Activated naive CD4-positive, alpha-beta T cell treated with anti-CD3 and anti-CD28 coated beads for 36 hours (primary cell): ENCODE measurements at regions of chr3 and their contacts with region 1.

Region 1: DNA sequence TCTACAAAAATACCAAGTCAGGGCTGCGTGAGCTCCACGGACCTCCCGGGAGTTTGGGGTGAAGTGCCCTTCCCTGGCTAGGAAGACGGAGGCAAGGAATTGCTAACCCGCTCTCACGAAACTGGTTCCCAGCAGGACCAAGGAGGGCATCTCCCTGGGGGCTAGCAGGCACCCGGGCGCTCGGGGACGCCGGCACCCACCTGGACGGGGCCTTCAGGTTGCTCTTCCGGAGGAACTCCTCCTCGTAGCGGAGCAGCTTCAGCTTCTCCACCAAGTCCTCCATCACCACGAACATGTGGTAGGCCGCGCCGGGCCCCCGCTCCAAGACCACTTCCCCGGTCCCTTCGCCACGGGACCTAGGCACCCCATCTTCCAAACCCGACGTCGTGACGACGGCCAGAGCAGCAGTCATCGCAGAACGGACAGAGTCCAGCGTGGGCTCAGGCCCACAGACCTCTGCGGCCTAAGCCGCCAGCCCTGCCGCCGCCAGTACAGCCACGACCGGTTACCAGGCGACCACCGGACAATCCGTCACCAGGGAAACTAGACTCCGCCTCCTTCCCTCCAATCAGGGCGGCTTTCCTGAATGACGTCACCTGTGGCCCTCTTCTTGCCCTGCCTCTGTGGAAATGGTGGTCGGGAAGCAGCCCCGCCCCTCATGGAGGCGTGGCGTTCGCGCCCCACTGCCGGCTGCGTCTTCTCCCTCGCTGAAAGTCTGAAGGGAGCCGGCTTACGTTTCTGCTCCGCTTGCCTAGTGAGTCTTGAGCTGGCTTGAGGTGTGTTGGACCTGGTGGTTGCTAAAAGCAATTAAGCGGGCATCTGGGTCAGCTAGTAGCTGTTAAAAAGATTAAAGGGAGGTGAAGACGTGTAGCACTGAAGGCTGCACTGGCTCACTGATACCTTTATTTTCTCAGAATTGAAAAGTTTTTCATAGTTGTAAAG is at the start of gene IFT57:
- DNase-seq: peak; percentile 95
- H3K4me3 Mint-ChIP-seq: peak within 1 kb of the TSS; percentile 97
- H3K27ac Mint-ChIP-seq: peak within 1 kb of the TSS; percentile 97
- H3K4me1 Mint-ChIP-seq: peaks cover 42% of the 10 kb centered on the region
- H3K27me3 Mint-ChIP-seq: no peaks in the 10 kb centered on the region
- total RNA-seq, gene IFT57: 26.2 to 27.7 TPM

Region 2: DNA sequence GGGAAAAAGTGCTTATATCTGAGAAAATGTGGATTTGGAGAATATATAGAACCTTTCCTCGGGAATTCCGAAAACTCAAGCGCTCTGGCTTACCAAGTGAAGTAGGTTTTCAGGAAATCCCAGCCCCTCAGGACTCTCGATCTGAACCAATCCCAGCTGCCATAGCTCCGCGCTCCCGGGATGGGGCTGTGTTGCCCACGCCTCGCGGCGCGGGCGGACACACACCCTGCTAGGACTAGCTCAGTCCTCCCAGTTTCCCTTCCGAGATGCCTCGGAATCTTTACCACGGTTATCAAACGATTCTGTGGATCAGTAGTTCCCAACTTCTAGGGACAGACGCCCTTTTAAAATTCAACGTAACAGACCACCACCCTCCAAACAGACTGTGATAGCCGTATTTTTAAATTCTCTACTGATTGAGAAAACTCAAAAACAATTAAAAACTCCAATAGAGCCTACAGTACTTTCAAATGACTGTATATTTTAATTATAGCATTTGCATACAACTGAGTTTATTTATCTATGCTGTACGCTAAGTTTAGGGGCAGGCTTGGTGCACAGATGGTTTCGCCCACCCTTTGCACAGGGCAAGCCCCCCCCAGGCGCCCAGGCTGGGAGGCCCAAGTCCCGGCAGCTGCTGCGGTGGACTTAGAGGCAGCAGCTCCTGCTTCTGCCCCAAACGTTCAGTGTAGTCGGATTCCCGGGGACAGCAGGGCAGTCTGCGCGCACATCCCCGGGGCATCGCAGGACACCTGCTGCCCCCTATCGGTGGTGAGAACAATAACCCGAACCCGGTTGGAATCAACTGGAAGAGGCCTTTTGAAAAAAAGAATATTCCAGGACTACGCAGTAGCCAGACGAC is 792.6 kb before region 1 on chr3:
- CTCF ChIA-PET with region 1: no interaction called
- intact Hi-C with region 1: loop called (anchors 5 kb)
- DNase-seq: peak; percentile 70
- H3K4me3 Mint-ChIP-seq: peak overlapping the region; percentile 74
- H3K27ac Mint-ChIP-seq: no peak overlapping the region
- H3K4me1 Mint-ChIP-seq: peaks cover 12% of the 10 kb centered on the region
- H3K27me3 Mint-ChIP-seq: peaks cover 10% of the 10 kb centered on the region

Region 3: DNA sequence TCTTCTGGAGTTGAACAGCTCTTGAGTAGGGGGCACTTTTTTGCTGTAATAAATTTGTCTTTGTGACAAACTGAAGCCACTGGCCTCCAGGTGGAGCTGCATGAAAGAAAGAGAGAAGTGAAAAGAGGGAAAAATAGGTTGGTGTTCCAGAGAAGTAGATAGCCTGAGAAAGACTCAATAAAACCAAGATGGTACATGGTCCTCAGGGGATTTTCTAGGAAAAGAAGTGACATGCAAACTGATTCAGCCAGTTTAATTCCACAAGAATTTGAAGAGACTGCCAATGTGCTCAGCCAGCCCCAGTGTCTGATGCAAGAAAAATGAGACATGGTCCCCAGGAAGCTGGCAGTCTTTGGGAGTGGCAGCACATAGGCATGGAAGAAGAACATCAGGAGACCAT is 284.0 kb before region 1 on chr3:
- CTCF ChIA-PET with region 1: no interaction called
- intact Hi-C with region 1: loop called (anchors 1 kb)
- DNase-seq: peak; percentile 21
- H3K4me3 Mint-ChIP-seq: no peak overlapping the region
- H3K27ac Mint-ChIP-seq: no peak overlapping the region
- H3K4me1 Mint-ChIP-seq: peaks cover 20% of the 10 kb centered on the region
- H3K27me3 Mint-ChIP-seq: no peaks in the 10 kb centered on the region

Region 4: GRCh38 chr3:108175352-108175751 is 46.8 kb before region 1 on chr3:
- CTCF ChIA-PET with region 1: no interaction called
- intact Hi-C with region 1: loop called (anchors 2 kb)
- DNase-seq: no peak
- H3K4me3 Mint-ChIP-seq: no peak overlapping the region
- H3K27ac Mint-ChIP-seq: peak overlapping the region; percentile 25
- H3K4me1 Mint-ChIP-seq: peaks cover 31% of the 10 kb centered on the region
- H3K27me3 Mint-ChIP-seq: no peaks in the 10 kb centered on the region

Region 5: DNA sequence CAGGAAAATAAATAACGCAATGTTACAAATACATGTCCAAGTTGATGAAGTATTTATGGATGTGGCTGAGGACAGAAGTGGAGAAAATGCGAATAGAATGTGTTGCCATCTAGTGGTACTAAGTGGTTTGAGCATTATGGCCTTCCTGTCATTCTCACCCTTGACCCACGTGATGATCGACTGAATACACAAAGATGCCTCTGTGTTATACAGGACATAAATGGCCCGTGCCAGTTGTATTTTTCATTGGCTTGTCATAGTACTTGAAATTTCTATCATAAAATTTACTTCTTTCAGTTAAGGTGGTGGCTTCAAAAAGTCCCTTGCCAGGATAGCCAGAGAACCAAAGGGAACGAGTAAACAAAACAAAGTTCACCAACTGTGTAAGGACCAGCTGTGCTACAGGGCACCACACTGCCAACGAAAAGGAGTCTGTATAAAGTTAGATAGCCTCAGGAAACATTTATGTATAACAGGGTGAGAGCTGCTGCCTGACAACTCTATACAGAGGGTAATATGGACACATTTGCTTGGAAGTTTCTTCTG is 184.6 kb after region 1 on chr3:
- CTCF ChIA-PET with region 1: interaction called, 4 read pairs
- intact Hi-C with region 1: loop called (anchors 2 kb)
- DNase-seq: peak; percentile 25
- H3K4me3 Mint-ChIP-seq: no peak overlapping the region
- H3K27ac Mint-ChIP-seq: no peak overlapping the region
- H3K4me1 Mint-ChIP-seq: peaks cover 2% of the 10 kb centered on the region
- H3K27me3 Mint-ChIP-seq: peaks cover 3% of the 10 kb centered on the region

Region 6: DNA sequence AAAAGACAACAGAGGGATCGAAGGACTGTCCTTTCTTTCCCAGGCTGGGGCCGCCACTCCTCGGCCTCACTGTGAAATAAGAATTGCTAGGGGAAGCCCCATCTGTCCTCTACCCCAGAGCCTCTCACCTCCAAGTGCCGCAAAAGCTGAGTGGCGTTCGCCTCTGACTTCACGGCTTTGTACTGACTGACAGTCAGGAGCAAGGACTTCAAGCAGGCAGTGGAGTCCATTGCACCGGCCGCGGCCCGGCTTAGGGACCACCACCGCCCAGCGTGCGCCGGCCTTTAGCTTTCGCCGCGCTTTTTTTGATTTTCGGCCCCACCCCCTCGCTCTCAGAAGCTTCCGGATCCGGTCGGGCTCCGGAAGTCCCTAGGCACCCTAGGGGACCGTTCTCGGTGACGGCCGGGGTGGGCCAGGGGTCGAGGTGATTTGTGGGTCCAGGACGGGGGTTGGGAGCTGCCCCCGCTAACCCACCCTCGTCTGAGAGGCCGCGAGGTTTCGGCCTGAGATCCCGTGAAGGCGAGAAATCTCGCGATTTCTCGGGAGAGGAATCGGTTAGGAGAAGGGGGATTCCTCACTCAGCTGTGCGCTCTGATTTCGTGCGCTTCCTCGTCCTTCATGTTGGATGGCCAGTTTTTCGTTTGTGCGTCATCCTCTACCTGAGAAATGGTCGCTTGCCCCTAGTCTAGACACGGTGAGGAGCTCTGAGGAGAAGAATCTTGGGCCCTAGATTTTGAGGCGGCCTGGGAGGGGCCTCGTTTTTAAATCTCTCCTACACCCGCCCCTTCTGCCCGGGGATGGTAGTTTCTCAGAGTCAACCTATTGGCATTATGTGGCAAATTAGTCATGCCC is 367.2 kb after region 1 on chr3 and contains the starts of genes CIP2A and DZIP3:
- CTCF ChIA-PET with region 1: no interaction called
- intact Hi-C with region 1: loop called (anchors 2 kb)
- DNase-seq: peak; percentile 84
- H3K4me3 Mint-ChIP-seq: peak within 1 kb of the TSS; percentile 95
- H3K27ac Mint-ChIP-seq: peak within 1 kb of the TSS; percentile 99
- H3K4me1 Mint-ChIP-seq: peaks cover 36% of the 10 kb centered on the region
- H3K27me3 Mint-ChIP-seq: no peaks in the 10 kb centered on the region
- total RNA-seq, gene CIP2A: 34.7 to 39.9 TPM
- total RNA-seq, gene DZIP3: 11.2 to 12.2 TPM